G401 (cell line): ENCODE measurements at regions of chr16 and their contacts with region 1.

Region 1: GRCh38 chr16:84065536-84066132 is 23.0 kb upstream of the SLC38A8 start:
- DNase-seq: peak; percentile 80

Region 2: GRCh38 chr16:83975590-83976260 is 89.9 kb before region 1 on chr16:
- in situ Hi-C with region 1: loop called (anchors 5 kb)
- DNase-seq: no peak